ENCODE measurements at regions of chr18 and their contacts with region 1.

Region 1: GRCh38 chr18:29693334-29693733 is 1349.2 kb downstream of the DSC3 start:
- DNase-seq: no peak
- H3K4me3 ChIP-seq: no peak overlapping the region
- H3K27ac ChIP-seq: no peak overlapping the region
- H3K4me1 ChIP-seq: no peaks in the 10 kb centered on the region; the same call in 1 of the 2 replicates
- H3K27me3 ChIP-seq: no peaks in the 10 kb centered on the region

Region 2: GRCh38 chr18:29594493-29594892 is 98.8 kb before region 1 on chr18:
- in situ Hi-C with region 1: loop called (anchors 25 kb)
- DNase-seq: no peak
- H3K4me3 ChIP-seq: no peak overlapping the region
- H3K27ac ChIP-seq: no peak overlapping the region
- H3K4me1 ChIP-seq: no peaks in the 10 kb centered on the region
- H3K27me3 ChIP-seq: no peaks in the 10 kb centered on the region